Transverse colon (tissue), 4 donors: ENCODE measurements at regions of chr2 and their contacts with region 1.

Region 1: GRCh38 chr2:8239531-8240088 is 442.2 kb upstream of the ID2 start:
- DNase-seq: no peak
- H3K4me3 ChIP-seq: no peak overlapping the region
- H3K27ac ChIP-seq: peak overlapping the region in 1 of 4 donors; percentile 19
- H3K4me1 ChIP-seq: peaks cover 9 to 30% (median 16%) of the 10 kb centered on the region in 4 donors
- H3K27me3 ChIP-seq: no peaks in the 10 kb centered on the region
- CTCF ChIP-seq: no peak
- EP300 ChIP-seq: no peak
- POLR2A ChIP-seq: no peak

Region 2: GRCh38 chr2:7868836-7869235 is 370.8 kb before region 1 on chr2:
- in situ Hi-C with region 1: no loop called
- intact Hi-C with region 1: no loop called
- DNase-seq: no peak
- H3K4me3 ChIP-seq: no peak overlapping the region
- H3K27ac ChIP-seq: no peak overlapping the region
- H3K4me1 ChIP-seq: no peaks in the 10 kb centered on the region
- H3K27me3 ChIP-seq: no peaks in the 10 kb centered on the region
- CTCF ChIP-seq: no peak
- EP300 ChIP-seq: no peak
- POLR2A ChIP-seq: no peak

Region 3: GRCh38 chr2:8229546-8229986 is 10.0 kb before region 1 on chr2:
- in situ Hi-C with region 1: no loop called
- intact Hi-C with region 1: no loop called
- DNase-seq: peak; percentile 41
- H3K4me3 ChIP-seq: no peak overlapping the region
- H3K27ac ChIP-seq: no peak overlapping the region
- H3K4me1 ChIP-seq: peaks cover 0 to 5% (median 0%) of the 10 kb centered on the region in 4 donors
- H3K27me3 ChIP-seq: no peaks in the 10 kb centered on the region
- CTCF ChIP-seq: no peak
- EP300 ChIP-seq: no peak
- POLR2A ChIP-seq: no peak

Region 4: DNA sequence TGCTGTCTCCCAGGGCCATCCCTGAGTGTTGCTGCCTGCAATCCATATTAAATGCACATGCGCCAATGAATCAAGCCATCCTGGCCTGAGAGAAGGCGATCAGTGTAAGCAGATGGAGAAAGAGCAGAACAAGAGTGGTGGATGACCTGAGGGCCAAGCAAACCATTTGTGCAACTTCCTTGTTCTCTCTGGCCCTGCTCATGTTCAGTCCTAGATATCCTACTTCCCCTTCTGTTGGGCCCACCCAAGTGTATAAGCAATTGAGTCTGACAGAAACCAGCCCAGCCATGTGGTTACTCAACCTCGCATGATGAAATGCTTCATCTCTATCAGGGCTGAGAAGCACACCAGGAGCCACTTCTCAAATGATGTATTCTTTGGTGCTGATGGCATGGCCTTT is 59.2 kb after region 1 on chr2:
- in situ Hi-C with region 1: no loop called
- intact Hi-C with region 1: loop called (anchors 10 kb)
- DNase-seq: no peak
- H3K4me3 ChIP-seq: no peak overlapping the region
- H3K27ac ChIP-seq: no peak overlapping the region
- H3K4me1 ChIP-seq: peaks cover 0 to 14% (median 7%) of the 10 kb centered on the region in 4 donors
- H3K27me3 ChIP-seq: no peaks in the 10 kb centered on the region
- CTCF ChIP-seq: no peak
- EP300 ChIP-seq: no peak
- POLR2A ChIP-seq: no peak

Region 5: GRCh38 chr2:8662239-8662895 is 422.8 kb after region 1 on chr2:
- in situ Hi-C with region 1: no loop called
- intact Hi-C with region 1: no loop called
- DNase-seq: no peak
- H3K4me3 ChIP-seq: no peak overlapping the region
- H3K27ac ChIP-seq: peak overlapping the region in 3 of 4 donors; percentile 28 to 53 (median 30)
- H3K4me1 ChIP-seq: peaks cover 0 to 10% (median 8%) of the 10 kb centered on the region in 4 donors
- H3K27me3 ChIP-seq: no peaks in the 10 kb centered on the region
- CTCF ChIP-seq: no peak
- EP300 ChIP-seq: no peak
- POLR2A ChIP-seq: no peak

Region 6: DNA sequence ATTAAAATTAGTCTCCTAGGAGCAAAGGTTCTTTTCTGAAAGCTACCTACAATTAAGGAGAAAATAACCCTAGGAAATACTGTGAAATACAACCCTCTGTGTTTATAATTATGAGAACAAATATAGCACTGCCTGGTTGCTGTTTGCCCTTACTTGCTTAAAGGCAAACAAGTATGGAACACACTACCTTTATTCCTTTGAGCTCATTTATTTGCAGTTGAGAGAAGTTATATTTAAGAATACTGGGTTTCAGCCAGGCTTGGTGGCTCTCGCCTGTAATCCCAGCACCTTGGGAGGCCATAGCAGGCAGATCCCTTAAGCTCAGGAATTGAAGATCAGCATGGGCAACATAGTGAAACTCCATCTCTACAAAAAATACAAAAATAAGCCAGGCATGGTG is 1211.6 kb after region 1 on chr2:
- in situ Hi-C with region 1: no loop called
- intact Hi-C with region 1: no loop called
- DNase-seq: no peak
- H3K4me3 ChIP-seq: no peak overlapping the region
- H3K27ac ChIP-seq: no peak overlapping the region
- H3K4me1 ChIP-seq: no peaks in the 10 kb centered on the region
- H3K27me3 ChIP-seq: no peaks in the 10 kb centered on the region
- CTCF ChIP-seq: no peak
- EP300 ChIP-seq: no peak
- POLR2A ChIP-seq: no peak